Testis (tissue), 5 donors: ENCODE measurements at regions of chr2 and their contacts with region 1.

Region 1: GRCh38 chr2:216698895-216699294 is 3.5 kb upstream of the IGFBP5 start:
- DNase-seq: peak; percentile 53
- H3K4me3 ChIP-seq: no peak overlapping the region
- H3K27ac ChIP-seq: no peak overlapping the region
- H3K4me1 ChIP-seq: peaks cover 12% of the 10 kb centered on the region
- H3K27me3 ChIP-seq: no peaks in the 10 kb centered on the region
- CTCF ChIP-seq: peak; percentile 42 to 81 (median 58)
- POLR2A ChIP-seq: no peak

Region 2: DNA sequence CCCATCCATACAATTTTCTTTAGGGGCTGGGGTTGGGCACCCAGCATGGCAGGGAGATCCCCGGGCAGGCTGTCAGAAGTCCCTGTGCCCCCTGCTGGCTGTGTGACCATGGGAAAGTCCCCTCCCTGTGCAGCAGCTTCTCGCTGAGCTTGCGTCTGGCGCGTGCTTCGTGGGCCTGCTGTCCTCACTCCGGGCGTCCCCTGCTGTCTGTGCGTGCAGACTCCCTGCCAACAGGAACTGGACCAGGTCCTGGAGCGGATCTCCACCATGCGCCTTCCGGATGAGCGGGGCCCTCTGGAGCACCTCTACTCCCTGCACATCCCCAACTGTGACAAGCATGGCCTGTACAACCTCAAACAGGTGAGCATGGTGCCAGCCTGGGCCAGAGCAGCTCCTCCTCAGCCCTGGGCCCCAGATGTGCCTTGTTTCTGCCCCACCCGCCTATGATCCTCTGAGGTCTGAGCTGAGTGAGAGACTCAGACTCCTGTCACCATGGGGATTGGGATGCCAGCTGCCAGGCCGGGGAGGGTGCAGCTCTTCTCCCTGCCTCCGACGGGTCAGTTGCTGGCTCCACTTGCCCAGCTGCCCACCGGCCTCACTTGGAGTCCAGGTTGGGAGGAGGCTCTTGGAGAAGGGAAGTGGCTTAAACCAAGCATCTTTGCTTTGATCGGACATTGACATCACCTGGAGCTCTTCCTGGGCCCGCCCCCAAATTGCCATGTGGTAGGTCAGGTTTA is 37.1 kb before region 1 on chr2:
- intact Hi-C with region 1: no loop called
- DNase-seq: peak; percentile 60
- H3K4me3 ChIP-seq: no peak overlapping the region
- H3K27ac ChIP-seq: no peak overlapping the region
- H3K4me1 ChIP-seq: peaks cover 18% of the 10 kb centered on the region
- H3K27me3 ChIP-seq: no peaks in the 10 kb centered on the region
- CTCF ChIP-seq: peak in 1 of 3 experiments; percentile 5
- POLR2A ChIP-seq: no peak

Region 3: DNA sequence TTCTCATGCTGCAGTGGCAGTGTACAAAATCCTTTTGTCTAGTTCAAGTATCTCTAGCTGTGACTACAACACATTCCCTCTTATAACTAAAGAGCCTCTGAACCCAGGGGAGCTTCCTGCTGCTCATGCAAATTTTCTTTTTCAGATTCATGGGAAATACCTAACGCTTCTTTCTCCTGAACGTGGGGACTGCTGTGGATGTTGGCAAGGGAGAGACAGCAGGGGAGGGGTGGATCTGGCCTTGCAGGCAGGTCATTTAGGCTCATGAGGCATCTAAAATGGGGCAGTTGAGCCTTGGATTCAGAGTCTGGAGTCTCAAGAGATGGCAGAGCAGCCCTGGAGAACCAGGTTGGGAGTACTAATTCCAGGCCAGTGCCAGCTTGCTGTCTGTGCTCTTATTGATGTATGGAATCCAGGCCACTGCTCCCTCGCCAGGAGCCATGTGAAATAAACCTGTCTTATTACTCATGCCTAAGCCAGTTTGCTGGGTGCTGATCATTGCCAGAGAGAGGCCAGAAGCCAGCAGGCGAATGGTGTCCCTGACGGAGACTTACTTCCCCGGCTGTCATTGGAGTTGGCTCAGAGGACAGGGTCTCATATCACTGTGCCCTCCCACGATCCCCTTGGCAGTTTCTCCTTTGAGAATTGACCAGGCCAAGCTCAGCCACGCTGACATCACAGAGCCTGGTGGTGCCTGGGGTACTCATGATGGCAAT is 190.2 kb after region 1 on chr2:
- intact Hi-C with region 1: no loop called
- DNase-seq: no peak
- H3K4me3 ChIP-seq: no peak overlapping the region
- H3K27ac ChIP-seq: no peak overlapping the region
- H3K4me1 ChIP-seq: no peaks in the 10 kb centered on the region
- H3K27me3 ChIP-seq: no peaks in the 10 kb centered on the region
- CTCF ChIP-seq: no peak
- POLR2A ChIP-seq: no peak

Region 4: GRCh38 chr2:217756375-217757107 is 1057.6 kb after region 1 on chr2:
- intact Hi-C with region 1: loop called (anchors 10 kb)
- DNase-seq: peak; percentile 81
- H3K4me3 ChIP-seq: peak overlapping the region; percentile 13 to 17
- H3K27ac ChIP-seq: peak overlapping the region in 1 of 2 donors; percentile 36
- H3K4me1 ChIP-seq: no peaks in the 10 kb centered on the region
- H3K27me3 ChIP-seq: no peaks in the 10 kb centered on the region
- CTCF ChIP-seq: peak; percentile 83 to 91 (median 87)
- POLR2A ChIP-seq: no peak